H1 (cell line): ENCODE measurements at regions of chr6 and their contacts with region 1.

Region 1: GRCh38 chr6:53725791-53726431 is 60.4 kb upstream of the KLHL31 start:
- DNase-seq: peak; percentile 39 to 93
- H3K4me3 ChIP-seq: no peak overlapping the region
- H3K27ac ChIP-seq: no peak overlapping the region
- H3K4me1 ChIP-seq: peaks cover 0 to 3% (median 3%) of the 10 kb centered on the region in 4 experiments; a peak in 3 of 7 replicates
- H3K27me3 ChIP-seq: no peaks in the 10 kb centered on the region
- CTCF ChIP-seq: peak; percentile 94 to 99 (median 97)
- EP300 ChIP-seq: no peak
- POLR2A ChIP-seq: no peak
- RAD21 ChIP-seq: peak; percentile 87 to 88

Region 2: DNA sequence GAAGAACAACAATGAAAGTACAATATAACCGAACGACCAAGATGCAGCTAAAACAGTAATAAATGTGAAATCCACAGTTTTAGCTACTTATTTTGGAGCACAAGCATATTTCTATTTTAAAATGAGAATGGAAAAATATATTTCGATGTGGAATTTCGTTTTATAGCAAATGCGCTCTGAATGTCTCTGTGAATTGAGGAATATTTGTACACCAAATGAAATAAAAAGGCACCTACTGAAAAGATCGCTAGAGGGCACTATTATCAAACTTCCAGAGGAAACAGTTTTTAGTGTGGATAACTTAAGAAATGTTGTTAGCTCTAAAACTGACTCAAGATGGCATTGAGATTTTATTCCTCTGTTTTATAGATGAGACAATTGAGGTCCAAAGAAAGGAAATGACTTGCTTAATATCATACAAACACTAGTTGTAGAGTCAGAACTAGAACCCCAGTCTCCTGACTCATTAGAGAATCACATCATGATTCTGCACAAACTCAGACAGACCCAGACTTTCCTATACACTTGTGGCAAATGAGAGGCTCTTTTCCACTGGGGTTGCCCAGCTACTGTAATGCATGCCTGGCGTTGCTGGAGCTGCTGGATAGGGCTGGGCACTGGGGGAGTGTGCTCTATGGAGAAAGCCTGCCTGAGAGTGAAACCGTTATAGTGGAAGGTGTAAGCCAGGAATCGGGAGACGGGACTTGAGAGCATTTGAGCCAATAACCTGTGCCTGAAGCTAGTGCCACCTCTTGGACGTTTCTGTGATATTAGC is 232.9 kb before region 1 on chr6:
- CTCF ChIA-PET with region 1: interaction called, 73 read pairs
- POLR2A ChIA-PET with region 1: interaction called, 3 read pairs
- DNase-seq: peak in 1 of 2 experiments; percentile 49
- H3K4me3 ChIP-seq: no peak overlapping the region
- H3K27ac ChIP-seq: no peak overlapping the region
- H3K4me1 ChIP-seq: no peaks in the 10 kb centered on the region
- H3K27me3 ChIP-seq: no peaks in the 10 kb centered on the region
- CTCF ChIP-seq: peak in 2 of 3 experiments; percentile 52; a peak in 2 of 4 replicates
- EP300 ChIP-seq: no peak
- POLR2A ChIP-seq: no peak
- RAD21 ChIP-seq: peak; percentile 71 to 75

Region 3: GRCh38 chr6:53615633-53616449 is 110.1 kb before region 1 on chr6:
- CTCF ChIA-PET with region 1: no interaction called
- POLR2A ChIA-PET with region 1: no interaction called
- DNase-seq: no peak
- H3K4me3 ChIP-seq: no peak overlapping the region
- H3K27ac ChIP-seq: no peak overlapping the region
- H3K4me1 ChIP-seq: peaks cover 0 to 2% (median 2%) of the 10 kb centered on the region in 4 experiments; a peak in 2 of 7 replicates
- H3K27me3 ChIP-seq: no peaks in the 10 kb centered on the region
- CTCF ChIP-seq: no peak
- EP300 ChIP-seq: no peak
- POLR2A ChIP-seq: no peak
- RAD21 ChIP-seq: no peak

Region 4: GRCh38 chr6:53691667-53692133 is 34.2 kb before region 1 on chr6:
- CTCF ChIA-PET with region 1: interaction called, 11 read pairs
- POLR2A ChIA-PET with region 1: no interaction called
- DNase-seq: no peak
- H3K4me3 ChIP-seq: no peak overlapping the region
- H3K27ac ChIP-seq: no peak overlapping the region
- H3K4me1 ChIP-seq: no peaks in the 10 kb centered on the region
- H3K27me3 ChIP-seq: no peaks in the 10 kb centered on the region
- CTCF ChIP-seq: no peak
- EP300 ChIP-seq: no peak
- POLR2A ChIP-seq: no peak
- RAD21 ChIP-seq: no peak

Region 5: DNA sequence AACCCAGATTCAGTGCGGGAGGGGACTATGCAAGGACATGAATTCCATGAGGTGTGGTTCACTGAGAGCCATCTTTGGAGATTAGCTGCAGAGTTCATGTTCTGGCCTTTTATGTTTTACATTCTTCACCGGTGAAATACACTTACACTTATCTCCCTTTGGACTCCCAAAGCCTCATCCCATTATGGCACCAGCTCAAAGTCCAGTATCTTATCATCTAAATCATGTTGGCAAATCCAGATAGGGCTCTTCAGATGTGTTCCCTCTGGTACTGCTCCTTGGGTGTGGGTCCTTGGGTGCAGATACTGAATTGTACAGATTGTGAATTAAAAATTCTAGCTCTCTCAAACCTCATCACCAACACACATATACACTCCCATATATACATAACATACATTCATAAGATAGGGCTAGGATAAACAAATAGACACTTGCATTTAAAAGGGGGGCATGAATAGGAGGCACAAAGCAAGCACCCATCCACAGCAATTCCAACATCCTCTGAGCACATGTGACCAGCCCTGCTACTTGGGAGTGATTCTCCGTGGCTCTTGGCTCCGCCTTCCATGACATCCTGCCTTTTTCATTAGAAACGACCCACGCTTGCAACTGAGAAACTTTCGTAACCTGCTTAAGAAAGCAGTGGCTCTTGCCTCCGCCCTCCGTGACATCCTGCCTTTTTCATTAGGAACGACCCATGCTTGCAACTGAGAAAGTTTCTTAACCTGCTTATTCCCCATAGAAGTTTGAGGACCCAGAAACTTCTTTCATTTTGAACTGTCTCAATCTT is 15.3 kb after region 1 on chr6:
- CTCF ChIA-PET with region 1: interaction called, 21 read pairs
- POLR2A ChIA-PET with region 1: no interaction called
- DNase-seq: no peak
- H3K4me3 ChIP-seq: no peak overlapping the region
- H3K27ac ChIP-seq: no peak overlapping the region
- H3K4me1 ChIP-seq: no peaks in the 10 kb centered on the region; a peak in 1 of 7 replicates
- H3K27me3 ChIP-seq: no peaks in the 10 kb centered on the region
- CTCF ChIP-seq: no peak
- EP300 ChIP-seq: no peak
- POLR2A ChIP-seq: no peak
- RAD21 ChIP-seq: no peak

Region 6: DNA sequence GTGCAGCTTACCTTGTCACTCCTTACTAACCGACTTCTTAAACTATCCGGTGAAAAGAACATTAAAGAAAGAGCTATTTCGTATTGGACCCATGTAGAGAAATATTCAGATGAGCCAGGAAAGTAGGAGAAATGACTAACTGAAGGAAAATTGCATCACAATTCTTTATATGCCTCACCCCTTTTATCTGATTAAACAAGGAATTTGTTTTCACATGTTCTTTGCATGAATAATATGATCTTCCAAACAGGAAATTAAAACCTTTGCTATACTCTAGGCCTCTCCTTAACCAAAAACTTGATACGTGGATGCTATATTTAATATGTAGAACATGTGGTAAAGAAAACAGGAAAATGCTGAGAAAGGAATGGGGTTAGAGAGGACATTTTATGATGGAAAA is 26.9 kb after region 1 on chr6:
- CTCF ChIA-PET with region 1: interaction called, 13 read pairs
- POLR2A ChIA-PET with region 1: no interaction called
- DNase-seq: no peak
- H3K4me3 ChIP-seq: no peak overlapping the region
- H3K27ac ChIP-seq: no peak overlapping the region
- H3K4me1 ChIP-seq: no peaks in the 10 kb centered on the region
- H3K27me3 ChIP-seq: no peaks in the 10 kb centered on the region
- CTCF ChIP-seq: no peak
- EP300 ChIP-seq: no peak
- POLR2A ChIP-seq: no peak
- RAD21 ChIP-seq: no peak